Common myeloid progenitor, CD34-positive (primary cell): ENCODE measurements at regions of chr1 and their contacts with region 1.

Region 1: DNA sequence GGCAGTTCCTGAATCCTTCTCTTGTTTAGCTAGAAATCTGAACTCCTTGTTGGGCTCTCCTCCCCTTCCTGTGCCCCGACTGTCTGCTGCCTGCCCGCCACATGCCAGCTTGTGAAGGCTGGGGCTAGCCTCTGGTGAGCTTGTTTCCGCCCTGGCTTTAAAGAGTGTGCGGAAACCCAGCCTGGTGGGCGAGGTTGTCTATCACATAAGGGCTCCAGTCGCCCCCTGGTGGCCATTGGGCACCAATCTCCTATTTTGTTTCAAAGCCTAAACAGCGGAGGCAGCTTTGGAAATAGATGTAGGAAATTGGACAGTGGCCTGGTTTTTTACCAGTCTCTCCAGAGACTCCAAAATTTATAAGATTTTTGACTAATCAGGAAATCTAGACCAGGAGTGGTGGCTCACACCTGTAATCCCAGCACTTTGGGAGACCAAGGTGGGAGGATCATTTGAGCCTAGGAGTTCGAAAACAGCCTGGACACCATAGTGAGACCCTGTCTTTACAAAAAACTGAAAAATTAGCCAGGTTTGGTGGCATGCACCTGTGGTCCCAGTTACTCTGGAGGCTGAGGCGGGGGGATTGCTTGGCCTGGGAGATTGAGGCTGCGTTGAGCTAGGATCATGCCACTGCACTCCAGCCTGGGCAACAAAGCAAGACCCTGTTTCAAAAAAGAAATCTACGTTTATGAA is 9.8 kb downstream of the ATP8B2 start:
- DNase-seq: peak; percentile 91 to 97 (median 97)
- H3K4me3 ChIP-seq: no peak overlapping the region
- H3K27ac ChIP-seq: no peak overlapping the region
- H3K4me1 ChIP-seq: peaks cover 2 to 47% (median 27%) of the 10 kb centered on the region in 4 experiments
- H3K27me3 ChIP-seq: no peaks in the 10 kb centered on the region

Region 2: DNA sequence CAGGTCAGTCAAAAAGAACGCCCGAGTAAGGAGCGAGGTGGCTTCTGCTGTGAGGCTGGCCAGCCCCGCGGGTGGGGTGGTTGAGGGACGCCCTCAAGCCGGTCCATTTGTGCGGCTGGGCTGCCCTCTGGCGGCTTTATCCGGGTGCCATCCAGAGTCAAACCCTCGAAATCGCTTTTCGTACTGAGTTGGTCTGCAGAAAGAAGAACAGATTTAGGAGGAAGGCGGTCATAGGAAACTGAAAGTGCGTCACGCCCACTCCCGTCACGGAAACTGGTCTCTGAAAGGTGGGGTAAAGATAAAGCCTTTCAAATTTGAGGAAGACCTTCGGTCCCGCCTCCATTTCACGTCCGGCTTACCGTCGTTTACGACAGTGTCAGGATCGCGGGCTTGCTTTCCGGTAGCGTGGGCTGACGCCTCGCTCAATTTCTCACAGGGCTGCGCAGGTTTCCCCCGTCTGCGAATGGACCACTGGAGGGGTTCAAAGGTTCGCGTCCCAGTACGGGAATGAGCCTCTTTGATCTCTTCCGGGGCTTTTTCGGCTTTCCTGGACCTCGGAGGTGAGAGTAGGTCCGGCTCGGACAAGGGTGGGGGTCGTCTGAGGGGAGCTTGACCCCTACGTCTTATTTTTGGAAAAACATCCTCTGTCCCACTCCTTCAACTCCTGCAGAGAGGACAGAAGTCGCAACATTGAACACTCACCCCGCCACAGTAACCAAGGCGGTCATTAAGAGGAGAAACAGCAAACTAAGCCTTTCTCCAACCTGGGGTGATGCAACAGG is 62.8 kb before region 1 on chr1 and contains the start of gene HAX1:
- CTCF ChIA-PET with region 1: interaction called, 17 read pairs
- POLR2A ChIA-PET with region 1: interaction called, 3 read pairs
- DNase-seq: peak; percentile 100
- H3K4me3 ChIP-seq: peak within 1 kb of the TSS; percentile 89 to 100 (median 96)
- H3K27ac ChIP-seq: peak within 1 kb of the TSS; percentile 87 to 93
- H3K4me1 ChIP-seq: peaks cover 0 to 19% (median 17%) of the 10 kb centered on the region in 4 experiments
- H3K27me3 ChIP-seq: no peaks in the 10 kb centered on the region

Region 3: GRCh38 chr1:154313066-154313356 is 22.2 kb before region 1 on chr1:
- CTCF ChIA-PET with region 1: interaction called, 10 read pairs
- POLR2A ChIA-PET with region 1: interaction called, 3 read pairs
- DNase-seq: no peak
- H3K4me3 ChIP-seq: no peak overlapping the region
- H3K27ac ChIP-seq: no peak overlapping the region
- H3K4me1 ChIP-seq: no peaks in the 10 kb centered on the region
- H3K27me3 ChIP-seq: no peaks in the 10 kb centered on the region

Region 4: GRCh38 chr1:154324669-154325582 is 10.2 kb before region 1 on chr1 and contains the start of gene ATP8B2:
- CTCF ChIA-PET with region 1: interaction called, 429 read pairs
- POLR2A ChIA-PET with region 1: interaction called, 17 read pairs
- DNase-seq: peak; percentile 83 to 91 (median 88)
- H3K4me3 ChIP-seq: peak within 1 kb of the TSS; percentile 82 to 98 (median 86)
- H3K27ac ChIP-seq: peak within 1 kb of the TSS; percentile 81 to 91
- H3K4me1 ChIP-seq: peaks cover 19 to 58% (median 54%) of the 10 kb centered on the region in 4 experiments
- H3K27me3 ChIP-seq: no peaks in the 10 kb centered on the region

Region 5: DNA sequence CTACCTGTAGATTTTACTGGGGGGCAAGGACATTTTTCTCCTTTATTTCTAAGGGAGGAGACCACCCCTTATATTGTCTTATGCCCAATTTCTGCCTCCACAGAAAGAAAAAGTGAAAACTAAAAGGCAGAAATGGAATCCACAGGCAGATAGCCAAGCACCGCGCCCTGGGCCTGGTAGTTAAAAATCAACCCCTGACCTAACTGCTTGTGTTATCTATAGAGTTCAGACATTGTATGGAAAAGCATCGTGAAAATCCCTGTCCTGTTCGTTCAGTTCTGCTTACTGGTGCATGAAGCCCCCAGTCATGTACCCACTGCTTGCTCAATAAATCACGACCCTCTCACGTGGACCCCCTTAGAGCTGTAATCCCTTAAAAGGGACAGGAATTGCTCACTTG is 36.3 kb after region 1 on chr1:
- CTCF ChIA-PET with region 1: no interaction called
- POLR2A ChIA-PET with region 1: no interaction called
- DNase-seq: no peak
- H3K4me3 ChIP-seq: no peak overlapping the region
- H3K27ac ChIP-seq: no peak overlapping the region
- H3K4me1 ChIP-seq: no peaks in the 10 kb centered on the region
- H3K27me3 ChIP-seq: no peaks in the 10 kb centered on the region

Region 6: DNA sequence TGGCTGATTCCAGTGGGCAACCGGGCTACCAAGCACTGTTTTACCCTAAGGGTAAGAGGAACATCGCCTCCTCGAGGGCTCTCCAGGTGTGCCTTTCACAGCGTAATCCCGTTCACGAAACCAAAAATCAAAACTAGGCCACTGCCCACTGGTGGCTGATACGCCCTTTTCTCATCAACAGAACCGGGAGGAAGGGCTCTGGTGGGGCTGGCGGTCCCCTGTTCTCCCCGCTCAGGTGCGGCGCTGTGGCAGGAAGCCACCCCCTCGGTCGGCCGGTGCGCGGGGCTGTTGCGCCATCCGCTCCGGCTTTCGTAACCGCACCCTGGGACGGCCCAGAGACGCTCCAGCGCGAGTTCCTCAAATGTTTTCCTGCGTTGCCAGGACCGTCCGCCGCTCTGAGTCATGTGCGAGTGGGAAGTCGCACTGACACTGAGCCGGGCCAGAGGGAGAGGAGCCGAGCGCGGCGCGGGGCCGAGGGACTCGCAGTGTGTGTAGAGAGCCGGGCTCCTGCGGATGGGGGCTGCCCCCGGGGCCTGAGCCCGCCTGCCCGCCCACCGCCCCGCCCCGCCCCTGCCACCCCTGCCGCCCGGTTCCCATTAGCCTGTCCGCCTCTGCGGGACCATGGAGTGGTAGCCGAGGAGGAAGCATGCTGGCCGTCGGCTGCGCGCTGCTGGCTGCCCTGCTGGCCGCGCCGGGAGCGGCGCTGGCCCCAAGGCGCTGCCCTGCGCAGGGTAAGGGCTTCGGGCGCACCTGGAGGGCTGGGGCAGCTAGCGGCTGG is 70.0 kb after region 1 on chr1 and contains the start of gene IL6R:
- CTCF ChIA-PET with region 1: interaction called, 10 read pairs
- POLR2A ChIA-PET with region 1: no interaction called
- DNase-seq: peak; percentile 96 to 97 (median 96)
- H3K4me3 ChIP-seq: peak within 1 kb of the TSS; percentile 27 to 89 (median 71)
- H3K27ac ChIP-seq: peak within 1 kb of the TSS; percentile 42 to 80
- H3K4me1 ChIP-seq: peaks cover 20 to 90% (median 85%) of the 10 kb centered on the region in 4 experiments
- H3K27me3 ChIP-seq: no peaks in the 10 kb centered on the region

Region 7: GRCh38 chr1:154419620-154420571 is 84.7 kb after region 1 on chr1:
- CTCF ChIA-PET with region 1: no interaction called
- POLR2A ChIA-PET with region 1: no interaction called
- DNase-seq: peak; percentile 75 to 93 (median 86)
- H3K4me3 ChIP-seq: peak overlapping the region in 5 of 7 experiments; percentile 0 to 42 (median 29)
- H3K27ac ChIP-seq: peak overlapping the region; percentile 58 to 75
- H3K4me1 ChIP-seq: peaks cover 7 to 55% (median 47%) of the 10 kb centered on the region in 4 experiments
- H3K27me3 ChIP-seq: no peaks in the 10 kb centered on the region